Naive thymus-derived CD4-positive, alpha-beta T cell (primary cell): ENCODE measurements at regions of chr22 and their contacts with region 1.

Region 1: DNA sequence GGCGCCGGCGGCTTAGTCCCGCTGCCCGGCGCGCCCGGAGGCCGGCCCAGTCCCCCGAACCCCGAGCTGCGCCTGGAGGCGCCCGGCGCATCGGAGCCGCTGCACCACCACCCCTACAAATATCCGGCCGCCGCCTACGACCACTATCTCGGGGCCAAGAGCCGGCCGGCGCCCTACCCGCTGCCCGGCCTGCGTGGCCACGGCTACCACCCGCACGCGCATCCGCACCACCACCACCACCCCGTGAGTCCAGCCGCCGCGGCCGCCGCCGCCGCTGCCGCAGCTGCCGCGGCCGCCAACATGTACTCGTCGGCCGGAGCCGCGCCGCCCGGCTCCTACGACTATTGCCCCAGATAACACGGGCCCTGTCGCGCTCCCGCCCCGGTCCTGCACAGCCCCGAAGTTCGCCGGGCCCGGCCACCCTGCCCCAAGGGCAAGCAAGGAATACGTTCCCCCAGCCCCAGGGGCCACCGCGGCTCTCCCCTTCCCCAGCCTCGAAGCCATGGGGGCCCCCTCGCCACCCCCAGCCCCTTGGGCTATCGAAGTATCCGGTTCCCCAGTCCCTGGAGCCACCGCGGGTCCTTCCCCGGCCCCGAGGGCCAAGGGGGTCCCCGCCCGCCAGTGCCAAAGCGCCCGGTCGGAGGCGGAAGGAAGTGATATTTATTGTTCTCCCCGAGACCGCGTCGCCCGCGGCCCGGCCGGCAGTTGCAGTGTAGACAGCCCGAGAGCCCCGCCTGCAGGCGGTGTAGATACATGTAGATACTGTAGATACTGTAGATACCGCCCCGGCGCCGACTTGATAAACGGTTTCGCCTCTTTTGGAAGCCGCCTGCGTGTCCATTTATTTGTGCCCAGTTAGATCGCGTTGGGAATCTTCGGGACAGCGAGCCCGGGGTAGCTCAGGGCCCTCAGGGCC is 6.2 kb downstream of the TBX1 start:
- DNase-seq: peak in 3 of 9 donors; percentile 23 to 52 (median 31)
- ATAC-seq: peak; percentile 79
- H3K4me3 ChIP-seq: no peak overlapping the region
- H3K4me3 Mint-ChIP-seq: peak overlapping the region in 9 of 10 donors; percentile 25 to 74 (median 43)
- H3K27ac ChIP-seq: no peak overlapping the region
- H3K27ac Mint-ChIP-seq: no peak overlapping the region
- H3K4me1 ChIP-seq: peaks cover 0 to 15% of the 10 kb centered on the region in 2 donors
- H3K4me1 Mint-ChIP-seq: peaks cover 0 to 28% (median 12%) of the 10 kb centered on the region in 7 donors
- H3K27me3 ChIP-seq: peaks cover 9 to 37% of the 10 kb centered on the region in 2 donors
- H3K27me3 Mint-ChIP-seq: peaks cover 45 to 67% (median 53%) of the 10 kb centered on the region in 5 donors

Region 2: DNA sequence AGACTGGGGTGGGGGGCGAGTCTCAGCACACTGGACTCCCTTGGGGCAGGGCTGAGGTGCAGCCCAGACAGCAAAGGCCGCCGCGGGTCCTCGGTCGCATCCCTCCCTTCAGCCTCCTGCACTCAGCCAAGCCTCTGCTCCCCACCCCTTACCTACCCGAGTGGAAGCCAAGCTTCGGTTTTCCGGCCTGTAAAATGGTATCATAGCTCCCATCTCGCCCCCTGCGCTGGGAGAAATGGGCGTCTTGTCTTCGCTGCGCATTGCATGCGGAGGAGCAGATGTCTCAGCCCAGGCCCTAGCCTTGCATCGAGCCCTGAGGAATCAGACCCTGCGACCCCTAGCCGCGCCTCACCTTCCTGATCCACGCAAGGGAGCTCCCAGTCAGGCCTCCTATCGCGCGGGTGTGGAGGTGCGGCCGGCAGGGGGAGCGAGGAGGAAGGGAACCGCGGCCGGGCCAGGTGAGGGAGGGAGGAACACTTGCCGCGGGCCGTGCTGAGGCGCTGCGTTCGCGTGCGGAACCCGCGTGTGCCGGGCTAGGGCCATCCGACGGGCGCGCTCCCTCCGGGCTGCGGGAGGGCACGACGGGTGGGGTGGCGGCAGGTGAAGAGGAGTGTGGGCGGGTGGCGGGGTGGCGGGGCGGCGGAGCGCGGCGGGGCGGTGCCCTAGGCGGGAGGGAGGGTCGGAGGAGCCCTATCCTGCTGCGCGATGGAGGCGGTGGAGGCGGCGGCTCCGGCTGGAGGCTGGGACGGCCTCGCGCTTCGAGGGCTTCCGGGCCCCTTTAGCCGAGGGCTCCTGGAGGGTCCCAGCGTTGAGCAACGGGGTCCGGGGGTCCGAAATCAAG is 10.3 kb before region 1 on chr22:
- CTCF ChIA-PET with region 1: interaction called, 3 read pairs
- POLR2A ChIA-PET with region 1: no interaction called
- intact Hi-C with region 1: loop called in 1 of 2 experiments (anchors 1 kb)
- DNase-seq: peak; percentile 56 to 79 (median 70)
- ATAC-seq: peak; percentile 79
- H3K4me3 ChIP-seq: peak overlapping the region; percentile 39
- H3K4me3 Mint-ChIP-seq: peak overlapping the region; percentile 62 to 89 (median 74)
- H3K27ac ChIP-seq: no peak overlapping the region
- H3K27ac Mint-ChIP-seq: no peak overlapping the region
- H3K4me1 ChIP-seq: peaks cover 8 to 23% of the 10 kb centered on the region in 2 donors
- H3K4me1 Mint-ChIP-seq: peaks cover 19 to 41% (median 25%) of the 10 kb centered on the region in 7 donors
- H3K27me3 ChIP-seq: peaks cover 0 to 11% of the 10 kb centered on the region in 2 donors
- H3K27me3 Mint-ChIP-seq: peaks cover 39 to 67% (median 53%) of the 10 kb centered on the region in 5 donors